ENCODE measurements at regions of chr12 and their contacts with region 1.

Region 1: GRCh38 chr12:8609061-8609570 is 3.5 kb downstream of the AICDA start:
- DNase-seq: peak in 4 of 7 donors; percentile 22 to 56 (median 30)
- H3K4me3 ChIP-seq: no peak overlapping the region
- H3K27ac ChIP-seq: no peak overlapping the region
- H3K4me1 ChIP-seq: no peaks in the 10 kb centered on the region
- H3K27me3 ChIP-seq: no peaks in the 10 kb centered on the region
- CTCF ChIP-seq: peak; percentile 51 to 74 (median 64)
- POLR2A ChIP-seq: no peak

Region 2: DNA sequence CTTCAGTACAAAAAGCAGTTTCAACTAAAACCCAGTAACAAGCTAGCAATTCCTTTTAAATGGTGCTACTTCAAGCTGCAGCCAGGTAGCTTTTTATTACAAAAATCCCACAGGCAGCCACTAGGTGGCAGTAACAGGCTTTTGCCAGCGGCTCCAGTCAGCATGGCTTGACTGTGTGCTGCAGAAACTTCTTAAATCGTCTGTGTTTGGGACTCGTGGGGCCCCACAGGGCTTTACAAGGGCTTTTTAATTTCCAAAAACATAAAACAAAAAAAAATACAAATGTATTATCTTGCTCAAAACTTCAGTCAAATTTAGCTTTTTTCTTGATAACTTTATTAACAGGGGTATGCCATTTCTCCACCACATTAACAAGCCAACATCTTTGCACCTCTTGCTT is 64.8 kb before region 1 on chr12:
- intact Hi-C with region 1: loop called in 1 of 2 experiments (anchors 10 kb)
- DNase-seq: peak; percentile 49 to 84 (median 73)
- H3K4me3 ChIP-seq: no peak overlapping the region
- H3K27ac ChIP-seq: no peak overlapping the region
- H3K4me1 ChIP-seq: no peaks in the 10 kb centered on the region
- H3K27me3 ChIP-seq: no peaks in the 10 kb centered on the region
- CTCF ChIP-seq: peak; percentile 74 to 97 (median 81)
- POLR2A ChIP-seq: no peak